ENCODE measurements at regions of chr3 and their contacts with region 1.

Region 1: DNA sequence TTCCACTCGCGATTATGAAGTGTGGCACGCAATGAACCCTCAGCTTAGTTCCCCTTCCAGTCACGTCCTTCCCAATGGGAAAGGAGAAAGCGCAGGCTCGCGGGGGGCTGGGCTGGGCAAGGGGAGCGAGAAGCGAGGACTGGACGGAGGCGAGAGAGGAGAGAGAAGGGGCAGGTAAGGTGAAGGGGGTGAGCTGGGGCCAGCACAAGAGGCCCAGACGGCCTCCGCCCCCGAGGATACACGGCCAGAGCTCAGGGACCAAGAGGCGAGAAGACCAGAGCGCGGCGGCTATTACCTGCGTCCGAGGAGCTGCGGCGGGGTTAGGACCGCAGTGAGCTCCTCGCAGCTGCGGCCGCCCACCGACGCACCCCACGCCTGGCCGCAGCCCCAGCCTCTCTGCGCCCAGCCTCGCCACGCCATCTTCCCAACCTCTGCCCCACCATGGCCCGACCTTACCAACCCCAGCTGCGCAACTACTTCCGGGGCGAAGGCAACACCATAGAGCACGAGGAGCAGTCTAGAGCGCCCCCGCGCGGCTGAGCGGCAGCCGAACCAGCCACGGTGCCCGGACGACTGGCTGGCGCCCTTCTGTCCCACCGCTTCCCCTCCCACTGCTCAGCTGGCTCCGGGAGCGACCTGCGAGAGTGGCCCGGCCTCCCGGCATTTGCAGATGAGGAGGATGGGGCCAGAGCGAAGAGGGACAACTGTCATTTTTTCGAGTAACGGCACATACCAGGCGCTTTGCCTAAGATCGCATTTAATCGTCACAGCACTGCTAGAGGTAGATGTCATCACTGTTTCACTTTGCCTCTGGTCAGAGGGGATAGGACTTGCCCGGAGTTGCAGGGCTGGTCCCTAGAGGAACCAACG is at the start of gene PARL:
- DNase-seq: peak; percentile 93 to 98 (median 96)
- ATAC-seq: peak; percentile 100
- H3K4me3 ChIP-seq: peak within 1 kb of the TSS; percentile 84 to 88
- H3K4me3 Mint-ChIP-seq: peak within 1 kb of the TSS; percentile 97
- H3K27ac ChIP-seq: peak within 1 kb of the TSS; percentile 61 to 70
- H3K27ac Mint-ChIP-seq: peak within 1 kb of the TSS; percentile 95
- H3K4me1 ChIP-seq: peaks cover 24% of the 10 kb centered on the region
- H3K4me1 Mint-ChIP-seq: peaks cover 42% of the 10 kb centered on the region
- H3K27me3 ChIP-seq: no peaks in the 10 kb centered on the region
- H3K27me3 Mint-ChIP-seq: no peaks in the 10 kb centered on the region
- CTCF ChIP-seq: peak; percentile 89
- total RNA-seq, gene PARL: 43.8 to 47.0 TPM

Region 2: DNA sequence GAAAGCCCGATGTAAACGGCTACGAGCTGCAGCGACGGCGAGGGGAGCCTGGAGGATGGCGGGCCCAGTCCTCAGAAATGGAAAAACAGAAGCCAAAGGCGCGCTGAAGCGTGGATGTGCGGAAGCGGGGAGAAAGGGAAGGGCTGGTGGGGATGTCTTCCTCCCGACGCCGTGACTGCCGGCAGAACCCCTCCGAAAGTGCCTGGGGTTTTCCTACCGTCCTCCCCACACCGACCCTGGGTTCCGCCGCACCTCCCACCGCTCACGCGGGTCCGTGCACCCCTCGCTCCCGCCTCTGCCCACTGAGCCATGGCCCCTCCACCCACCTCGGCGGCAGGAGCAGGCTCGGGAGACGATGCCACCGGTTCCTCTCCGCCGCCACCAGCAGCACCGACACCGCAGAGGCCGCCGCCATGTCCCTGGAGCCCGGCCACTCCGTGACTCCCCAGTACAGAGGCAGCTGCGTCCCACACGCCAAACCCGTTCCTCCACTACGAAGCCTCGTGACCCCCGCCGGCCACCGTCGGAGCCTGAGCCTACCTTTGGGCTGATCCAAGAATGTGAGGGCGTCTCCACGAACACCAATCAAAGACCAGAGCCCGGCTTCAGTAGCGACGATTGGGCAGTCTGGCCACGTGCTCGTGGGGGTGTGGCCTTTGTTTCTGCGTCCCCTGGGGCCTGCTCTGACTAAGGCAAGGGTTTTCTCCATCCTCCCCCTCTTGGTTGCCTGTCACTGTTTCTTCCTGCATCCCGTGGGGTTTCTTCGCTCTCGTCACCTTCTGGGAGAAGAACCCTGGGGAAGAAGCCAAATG is 785.4 kb before region 1 on chr3 and contains the start of gene MCCC1:
- CTCF ChIA-PET with region 1: no interaction called
- POLR2A ChIA-PET with region 1: no interaction called
- intact Hi-C with region 1: loop called in 1 of 2 experiments (anchors 5 kb)
- DNase-seq: peak; percentile 93 to 99 (median 97)
- ATAC-seq: peak; percentile 97
- H3K4me3 ChIP-seq: peak within 1 kb of the TSS; percentile 85 to 86
- H3K4me3 Mint-ChIP-seq: peak within 1 kb of the TSS; percentile 98
- H3K27ac ChIP-seq: peak within 1 kb of the TSS; percentile 72 to 76
- H3K27ac Mint-ChIP-seq: peak within 1 kb of the TSS; percentile 98
- H3K4me1 ChIP-seq: peaks cover 24% of the 10 kb centered on the region
- H3K4me1 Mint-ChIP-seq: peaks cover 43% of the 10 kb centered on the region
- H3K27me3 ChIP-seq: no peaks in the 10 kb centered on the region
- H3K27me3 Mint-ChIP-seq: no peaks in the 10 kb centered on the region
- CTCF ChIP-seq: no peak
- total RNA-seq, gene MCCC1: 12.8 to 25.9 TPM

Region 3: GRCh38 chr3:183697610-183698317 is 186.9 kb before region 1 on chr3 and contains the start of gene YEATS2:
- CTCF ChIA-PET with region 1: no interaction called
- POLR2A ChIA-PET with region 1: no interaction called
- intact Hi-C with region 1: loop called in 1 of 2 experiments (anchors 5 kb)
- DNase-seq: peak; percentile 28 to 85 (median 62)
- ATAC-seq: peak; percentile 86
- H3K4me3 ChIP-seq: peak within 1 kb of the TSS; percentile 90 to 93
- H3K4me3 Mint-ChIP-seq: peak within 1 kb of the TSS; percentile 99
- H3K27ac ChIP-seq: peak within 1 kb of the TSS; percentile 69 to 74
- H3K27ac Mint-ChIP-seq: peak within 1 kb of the TSS; percentile 94
- H3K4me1 ChIP-seq: peaks cover 19% of the 10 kb centered on the region
- H3K4me1 Mint-ChIP-seq: peaks cover 31% of the 10 kb centered on the region
- H3K27me3 ChIP-seq: no peaks in the 10 kb centered on the region
- H3K27me3 Mint-ChIP-seq: no peaks in the 10 kb centered on the region
- CTCF ChIP-seq: no peak
- total RNA-seq, gene YEATS2: 12.1 to 12.4 TPM

Region 4: GRCh38 chr3:184017672-184018423 is 133.2 kb after region 1 on chr3 and contains the start of gene ABCC5:
- CTCF ChIA-PET with region 1: no interaction called
- POLR2A ChIA-PET with region 1: interaction called, 3 read pairs
- intact Hi-C with region 1: loop called in 1 of 2 experiments (anchors 2 kb)
- DNase-seq: peak; percentile 60 to 91 (median 80)
- ATAC-seq: peak; percentile 94
- H3K4me3 ChIP-seq: peak within 1 kb of the TSS; percentile 94 to 98
- H3K4me3 Mint-ChIP-seq: peak within 1 kb of the TSS; percentile 99
- H3K27ac ChIP-seq: peak within 1 kb of the TSS; percentile 51 to 56
- H3K27ac Mint-ChIP-seq: peak within 1 kb of the TSS; percentile 83
- H3K4me1 ChIP-seq: peaks cover 11% of the 10 kb centered on the region
- H3K4me1 Mint-ChIP-seq: peaks cover 32% of the 10 kb centered on the region
- H3K27me3 ChIP-seq: no peaks in the 10 kb centered on the region
- H3K27me3 Mint-ChIP-seq: peaks cover 12% of the 10 kb centered on the region
- CTCF ChIP-seq: peak; percentile 76
- total RNA-seq, gene ABCC5: 7.4 to 8.3 TPM

Region 5: DNA sequence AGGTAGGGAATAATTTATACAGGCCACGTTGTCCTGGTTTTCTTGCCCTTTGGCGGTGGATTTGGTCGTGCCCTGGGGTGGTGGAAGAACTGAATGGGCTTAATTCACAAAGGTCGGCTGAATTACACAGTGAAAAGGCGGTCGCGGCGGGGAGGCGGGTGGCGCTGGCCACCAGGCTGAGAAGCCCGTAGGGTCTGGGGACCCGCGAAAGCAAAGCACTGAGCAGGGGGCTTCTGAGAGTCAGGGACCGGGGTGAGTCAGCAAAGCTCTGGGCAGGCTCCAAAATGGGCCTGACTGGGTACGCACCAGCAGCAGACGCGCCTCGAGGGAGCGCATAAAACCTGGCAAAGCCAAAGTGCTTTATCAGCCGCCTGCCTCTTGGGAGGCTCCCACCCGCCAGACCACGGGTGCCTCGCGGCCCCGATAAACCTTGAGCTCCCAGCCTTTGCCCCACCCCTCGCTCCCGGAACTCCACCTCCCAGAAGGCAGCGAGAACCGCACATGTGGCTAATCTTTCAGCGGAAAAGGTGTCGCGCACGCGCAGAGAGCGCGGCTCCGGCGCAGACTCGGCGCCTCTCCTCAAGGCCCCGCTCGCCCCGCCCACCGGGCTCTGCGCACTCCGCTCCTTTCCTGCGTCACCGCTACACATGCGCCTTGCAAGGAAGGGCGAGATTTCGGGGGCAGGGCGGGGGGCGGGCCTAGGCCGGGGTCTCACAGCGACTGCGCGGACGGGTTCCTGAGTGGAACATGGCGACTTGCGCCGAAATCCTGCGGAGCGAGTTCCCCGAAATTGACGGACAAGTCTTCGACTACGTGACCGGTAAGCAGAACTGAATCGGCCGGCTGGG is 301.0 kb after region 1 on chr3 and contains the start of gene ABCF3:
- CTCF ChIA-PET with region 1: no interaction called
- POLR2A ChIA-PET with region 1: interaction called, 3 read pairs
- intact Hi-C with region 1: loop called in 1 of 2 experiments (anchors 1 kb)
- DNase-seq: peak; percentile 98 to 100 (median 99)
- ATAC-seq: peak; percentile 97
- H3K4me3 ChIP-seq: peak within 1 kb of the TSS; percentile 95 to 98
- H3K4me3 Mint-ChIP-seq: peak within 1 kb of the TSS; percentile 98
- H3K27ac ChIP-seq: peak within 1 kb of the TSS; percentile 82 to 83
- H3K27ac Mint-ChIP-seq: peak within 1 kb of the TSS; percentile 96
- H3K4me1 ChIP-seq: peaks cover 26% of the 10 kb centered on the region
- H3K4me1 Mint-ChIP-seq: peaks cover 42% of the 10 kb centered on the region
- H3K27me3 ChIP-seq: no peaks in the 10 kb centered on the region
- H3K27me3 Mint-ChIP-seq: no peaks in the 10 kb centered on the region
- CTCF ChIP-seq: no peak
- total RNA-seq, gene ABCF3: 192 to 193 TPM

Region 6: DNA sequence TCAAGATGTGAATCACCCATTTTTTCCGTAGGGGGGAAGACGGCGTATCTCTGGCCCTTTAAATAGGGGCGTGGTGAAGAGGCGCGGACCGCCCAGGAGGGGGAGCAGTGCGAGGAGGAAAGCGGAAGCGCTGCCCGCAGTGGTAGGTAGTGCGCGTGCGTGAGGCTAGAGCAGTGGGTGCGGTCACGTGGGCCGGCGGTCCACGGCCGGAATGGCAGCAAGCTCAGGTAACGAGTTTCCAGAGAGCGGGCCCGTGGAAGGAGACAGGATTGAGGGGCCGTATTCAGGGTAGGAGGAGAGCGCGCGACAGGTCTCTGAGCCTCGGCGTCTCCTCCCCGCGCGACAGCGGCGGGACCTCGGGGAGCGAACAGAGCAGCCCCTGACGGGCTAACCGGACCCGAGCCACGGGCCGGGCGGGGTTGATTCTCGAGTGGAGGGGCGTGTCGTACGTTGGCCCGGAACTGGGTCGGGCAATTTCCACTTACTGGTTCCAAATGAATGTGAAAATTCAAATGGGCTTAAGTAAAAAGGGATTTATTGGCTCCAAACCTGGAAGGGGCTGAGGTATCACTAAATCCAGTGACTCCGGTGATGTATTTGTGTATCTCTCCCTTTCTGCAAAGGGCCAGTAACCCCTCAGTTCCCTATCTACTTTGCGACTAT is 927.5 kb after region 1 on chr3 and contains the start of gene VPS8:
- CTCF ChIA-PET with region 1: no interaction called
- POLR2A ChIA-PET with region 1: no interaction called
- intact Hi-C with region 1: loop called in 1 of 2 experiments (anchors 2 kb)
- DNase-seq: peak; percentile 92 to 98 (median 97)
- ATAC-seq: peak; percentile 82
- H3K4me3 ChIP-seq: peak within 1 kb of the TSS; percentile 64 to 86
- H3K4me3 Mint-ChIP-seq: peak within 1 kb of the TSS; percentile 99
- H3K27ac ChIP-seq: peak within 1 kb of the TSS; percentile 82 to 87
- H3K27ac Mint-ChIP-seq: peak within 1 kb of the TSS; percentile 99
- H3K4me1 ChIP-seq: peaks cover 46% of the 10 kb centered on the region
- H3K4me1 Mint-ChIP-seq: peaks cover 50% of the 10 kb centered on the region
- H3K27me3 ChIP-seq: no peaks in the 10 kb centered on the region
- H3K27me3 Mint-ChIP-seq: no peaks in the 10 kb centered on the region
- CTCF ChIP-seq: peak; percentile 42
- total RNA-seq, gene VPS8: 61.4 to 65.0 TPM